Activated B cell treated with CpG ODN at 0.5 μM for 24 hours (primary cell): ENCODE measurements at regions of chr1 and their contacts with region 1.

Region 1: GRCh38 chr1:157862114-157863070 is 20.8 kb upstream of the CD5L start:
- DNase-seq: no peak
- ATAC-seq: peak; percentile 47
- H3K4me3 Mint-ChIP-seq: no peak overlapping the region
- H3K27ac Mint-ChIP-seq: peak overlapping the region; percentile 31
- H3K4me1 Mint-ChIP-seq: peaks cover 18% of the 10 kb centered on the region
- H3K27me3 Mint-ChIP-seq: no peaks in the 10 kb centered on the region
- CTCF ChIP-seq: no peak

Region 2: GRCh38 chr1:157380523-157380922 is 481.9 kb before region 1 on chr1:
- CTCF ChIA-PET with region 1: no interaction called
- POLR2A ChIA-PET with region 1: no interaction called
- intact Hi-C with region 1: loop called (anchors 1 kb)
- DNase-seq: no peak
- ATAC-seq: no peak
- H3K4me3 Mint-ChIP-seq: no peak overlapping the region
- H3K27ac Mint-ChIP-seq: no peak overlapping the region
- H3K4me1 Mint-ChIP-seq: peaks cover 2% of the 10 kb centered on the region
- H3K27me3 Mint-ChIP-seq: peaks cover 8% of the 10 kb centered on the region
- CTCF ChIP-seq: no peak

Region 3: GRCh38 chr1:157653494-157653873 is 208.9 kb before region 1 on chr1:
- CTCF ChIA-PET with region 1: no interaction called
- POLR2A ChIA-PET with region 1: no interaction called
- intact Hi-C with region 1: no loop called
- DNase-seq: no peak
- ATAC-seq: peak; percentile 6
- H3K4me3 Mint-ChIP-seq: peak overlapping the region; percentile 69
- H3K27ac Mint-ChIP-seq: peak overlapping the region; percentile 82
- H3K4me1 Mint-ChIP-seq: peaks cover 48% of the 10 kb centered on the region
- H3K27me3 Mint-ChIP-seq: no peaks in the 10 kb centered on the region
- CTCF ChIP-seq: no peak

Region 4: GRCh38 chr1:157704878-157705277 is 157.5 kb before region 1 on chr1:
- CTCF ChIA-PET with region 1: no interaction called
- POLR2A ChIA-PET with region 1: no interaction called
- intact Hi-C with region 1: no loop called
- DNase-seq: no peak
- ATAC-seq: peak; percentile 71
- H3K4me3 Mint-ChIP-seq: peak overlapping the region; percentile 42
- H3K27ac Mint-ChIP-seq: peak overlapping the region; percentile 74
- H3K4me1 Mint-ChIP-seq: peaks cover 95% of the 10 kb centered on the region
- H3K27me3 Mint-ChIP-seq: no peaks in the 10 kb centered on the region
- CTCF ChIP-seq: no peak